Activated naive CD8-positive, alpha-beta T cell treated with anti-CD3 and anti-CD28 coated beads, Interleukin-2, amount 10 ng/mL, durations not matched to agents 7 days and 5 days (primary cell): ENCODE measurements at regions of chr14 and their contacts with region 1.

Region 1: GRCh38 chr14:91418387-91419043 is 895 bp upstream of the CCDC88C start:
- DNase-seq: peak; percentile 89
- ATAC-seq: peak; percentile 12
- H3K4me3 Mint-ChIP-seq: peak overlapping the region; percentile 81
- H3K27ac Mint-ChIP-seq: peak overlapping the region; percentile 65
- H3K4me1 Mint-ChIP-seq: peaks cover 27% of the 10 kb centered on the region
- H3K27me3 Mint-ChIP-seq: peaks cover 2% of the 10 kb centered on the region

Region 2: DNA sequence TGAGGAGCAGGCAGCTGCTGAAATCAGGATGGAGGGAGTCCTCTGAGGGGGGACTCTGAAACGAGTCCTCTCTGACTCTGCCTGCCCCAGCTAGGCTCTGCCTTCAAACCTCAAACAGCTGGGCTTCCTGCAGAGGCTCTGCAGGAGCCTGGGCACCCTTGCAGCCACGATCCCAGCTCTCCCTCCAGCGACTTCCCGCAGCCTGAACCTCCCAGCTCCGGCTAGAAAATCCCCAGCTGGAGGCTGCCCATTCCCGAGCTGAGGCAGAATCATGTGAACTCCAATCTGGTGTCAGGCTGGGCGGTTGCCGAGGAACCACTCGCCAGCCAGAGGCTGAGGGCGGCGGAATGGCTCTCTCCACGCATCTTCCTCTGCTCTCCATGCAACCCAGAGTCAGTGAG is 174.0 kb before region 1 on chr14 and contains the start of gene GPR68:
- POLR2A ChIA-PET with region 1: interaction called, 11 read pairs
- DNase-seq: peak; percentile 64
- ATAC-seq: peak; percentile 13
- H3K4me3 Mint-ChIP-seq: peak within 1 kb of the TSS; percentile 88
- H3K27ac Mint-ChIP-seq: peak within 1 kb of the TSS; percentile 90
- H3K4me1 Mint-ChIP-seq: peaks cover 78% of the 10 kb centered on the region
- H3K27me3 Mint-ChIP-seq: no peaks in the 10 kb centered on the region
- total RNA-seq, gene GPR68: 23.0 to 28.0 TPM

Region 3: DNA sequence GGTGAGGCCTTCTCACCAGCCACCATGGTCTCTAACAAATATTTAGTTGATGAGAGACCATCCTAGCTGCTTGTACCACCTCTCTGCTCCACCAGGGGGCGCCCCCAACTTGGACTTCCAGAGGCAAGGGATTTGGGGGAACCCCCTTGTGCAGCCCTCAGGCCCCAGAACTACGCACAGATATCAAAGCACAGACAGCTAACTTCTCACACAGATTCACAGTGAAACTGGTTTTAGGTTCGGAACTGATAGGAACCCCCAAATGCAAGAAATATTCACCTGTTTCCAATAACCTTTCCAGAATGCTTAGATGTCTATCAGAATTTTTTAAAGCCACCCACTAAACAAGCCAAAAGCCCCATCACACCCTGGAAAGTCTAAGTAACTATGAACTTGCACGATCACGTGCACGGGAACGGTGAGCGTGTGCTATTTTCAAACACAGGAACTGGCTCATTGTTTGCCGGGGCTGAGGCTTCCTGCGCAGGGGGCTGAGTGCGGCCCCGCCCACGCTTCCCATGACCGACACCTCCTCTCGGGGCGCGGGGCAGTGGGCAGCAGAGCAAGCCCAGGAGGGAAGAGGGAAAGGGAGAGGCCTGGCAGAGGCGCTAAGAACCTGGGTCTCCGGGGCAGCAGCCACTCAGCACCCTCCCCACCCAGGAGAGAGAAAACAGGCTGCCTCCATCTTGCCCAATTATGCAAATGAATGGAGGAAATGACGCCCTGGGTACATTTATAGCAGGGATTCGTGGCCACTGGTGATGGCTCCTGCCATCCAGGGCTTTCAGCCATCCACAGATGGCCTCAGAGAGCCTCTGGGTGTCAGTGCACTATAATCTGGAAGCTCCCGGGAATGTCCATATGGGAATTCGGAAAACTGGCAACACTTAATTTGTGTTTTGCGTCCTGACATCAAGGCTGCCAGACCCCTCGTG is 94.6 kb before region 1 on chr14:
- POLR2A ChIA-PET with region 1: interaction called, 72 read pairs
- DNase-seq: peak; percentile 93
- ATAC-seq: peak; percentile 81
- H3K4me3 Mint-ChIP-seq: peak overlapping the region; percentile 79
- H3K27ac Mint-ChIP-seq: peak overlapping the region; percentile 95
- H3K4me1 Mint-ChIP-seq: peaks cover 55% of the 10 kb centered on the region
- H3K27me3 Mint-ChIP-seq: no peaks in the 10 kb centered on the region

Region 4: GRCh38 chr14:91373591-91374254 is 44.8 kb before region 1 on chr14:
- POLR2A ChIA-PET with region 1: interaction called, 81 read pairs
- DNase-seq: no peak
- ATAC-seq: peak; percentile 49
- H3K4me3 Mint-ChIP-seq: peak overlapping the region; percentile 80
- H3K27ac Mint-ChIP-seq: peak overlapping the region; percentile 90
- H3K4me1 Mint-ChIP-seq: peaks cover 85% of the 10 kb centered on the region
- H3K27me3 Mint-ChIP-seq: no peaks in the 10 kb centered on the region

Region 5: GRCh38 chr14:91405241-91405721 is 13.2 kb before region 1 on chr14:
- POLR2A ChIA-PET with region 1: interaction called, 139 read pairs
- DNase-seq: peak; percentile 63
- ATAC-seq: peak; percentile 41
- H3K4me3 Mint-ChIP-seq: peak overlapping the region; percentile 66
- H3K27ac Mint-ChIP-seq: peak overlapping the region; percentile 77
- H3K4me1 Mint-ChIP-seq: peaks cover 76% of the 10 kb centered on the region
- H3K27me3 Mint-ChIP-seq: no peaks in the 10 kb centered on the region

Region 6: GRCh38 chr14:91614187-91614586 is 195.7 kb after region 1 on chr14:
- POLR2A ChIA-PET with region 1: no interaction called
- DNase-seq: no peak
- ATAC-seq: no peak
- H3K4me3 Mint-ChIP-seq: no peak overlapping the region
- H3K27ac Mint-ChIP-seq: no peak overlapping the region
- H3K4me1 Mint-ChIP-seq: no peaks in the 10 kb centered on the region
- H3K27me3 Mint-ChIP-seq: no peaks in the 10 kb centered on the region